ENCODE measurements at regions of chr15 and their contacts with region 1.

Region 1: DNA sequence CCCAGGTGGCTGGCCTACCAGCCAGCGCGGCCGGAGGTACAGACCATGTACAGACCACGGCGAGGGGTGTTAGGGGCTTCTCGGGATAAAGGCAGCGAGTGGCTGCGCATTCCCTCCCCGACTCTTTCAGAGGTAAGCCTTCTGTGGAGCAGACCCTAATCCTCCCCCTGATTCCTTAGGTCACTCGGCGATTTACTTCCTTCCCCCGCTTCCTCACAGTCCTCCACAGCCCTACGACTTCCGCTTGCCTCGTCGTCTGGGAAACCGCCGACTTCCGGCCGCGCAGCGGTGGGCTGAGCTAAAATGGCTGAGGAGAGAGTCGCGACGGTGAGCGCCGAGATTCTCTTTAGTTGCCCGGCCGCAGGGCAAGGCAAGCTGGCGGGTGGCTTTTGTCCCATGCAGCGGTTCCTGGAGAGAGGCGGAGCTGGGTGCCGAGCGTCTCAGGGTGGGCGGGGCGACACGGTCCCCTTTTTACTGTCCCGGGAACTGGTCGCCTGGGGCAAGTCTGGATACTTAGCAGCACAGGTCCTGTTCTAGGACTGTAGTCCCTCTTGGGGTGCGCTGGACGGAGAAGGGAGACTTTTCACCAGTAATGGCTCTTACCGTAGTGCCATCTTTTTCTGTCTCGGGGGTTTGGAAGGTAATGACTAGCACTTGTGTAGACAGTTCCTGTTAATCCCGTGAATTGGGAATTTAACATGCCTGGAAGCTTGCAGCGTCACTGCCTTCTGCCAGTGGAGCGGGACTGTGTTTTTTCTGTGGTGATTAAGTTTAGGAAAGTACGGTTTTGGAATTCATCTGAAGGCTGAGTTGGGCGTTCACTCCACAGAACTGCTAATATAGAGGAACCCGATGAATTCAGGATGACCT is at the starts of genes BBS4 and HIGD2B:
- H3K4me3 ChIP-seq: peak within 1 kb of the TSS; percentile 91
- H3K27ac ChIP-seq: peak within 1 kb of the TSS; percentile 83
- H3K4me1 ChIP-seq: peaks cover 10% of the 10 kb centered on the region
- CTCF ChIP-seq: no peak; the same call in 1 of the 2 replicates

Region 2: DNA sequence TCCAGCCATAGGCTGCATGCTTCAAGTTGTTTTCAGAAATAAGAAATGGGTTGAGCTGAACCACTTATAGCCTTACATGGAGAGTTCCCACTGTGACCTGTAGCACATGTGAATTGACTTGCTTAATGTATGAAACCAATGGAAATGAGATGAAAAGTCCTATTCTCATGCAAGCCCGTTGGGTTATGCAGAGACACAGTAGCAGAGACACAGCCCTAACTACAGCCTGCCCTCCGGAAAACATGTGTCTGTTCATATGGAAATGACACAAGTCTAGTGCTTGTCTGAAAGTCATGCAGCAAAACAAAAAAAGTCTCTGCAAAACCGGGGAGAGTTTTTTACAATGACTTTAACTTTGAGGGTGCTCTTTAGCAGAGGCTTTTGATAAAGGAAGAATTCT is 14.6 kb before region 1 on chr15:
- CTCF ChIA-PET with region 1: interaction called, 19 read pairs
- POLR2A ChIA-PET with region 1: interaction called, 3 read pairs
- H3K4me3 ChIP-seq: no peak overlapping the region
- H3K27ac ChIP-seq: no peak overlapping the region
- H3K4me1 ChIP-seq: no peaks in the 10 kb centered on the region
- CTCF ChIP-seq: no peak

Measured in HEK293 (cell line).